ENCODE measurements at regions of chr15 and their contacts with region 1.

Region 1: DNA sequence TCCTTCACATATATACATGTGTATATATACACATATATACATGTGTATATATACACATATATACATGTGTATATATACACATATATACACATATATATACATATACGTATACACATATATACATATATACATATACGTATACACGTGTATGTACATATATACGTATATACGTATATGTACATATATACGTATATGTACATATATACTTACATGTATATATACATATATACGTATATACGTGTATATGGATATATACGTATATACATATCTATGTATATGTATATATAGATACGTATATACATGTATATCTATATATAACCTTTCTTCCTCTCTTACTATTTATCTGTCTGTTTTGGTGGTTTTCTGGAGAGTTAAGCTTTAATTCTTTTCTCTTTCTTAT is 114.8 kb downstream of the NR2E3 start:
- DNase-seq: no peak
- ATAC-seq: no peak
- H3K4me3 Mint-ChIP-seq: no peak overlapping the region
- H3K27ac Mint-ChIP-seq: no peak overlapping the region
- H3K4me1 Mint-ChIP-seq: no peaks in the 10 kb centered on the region
- H3K27me3 Mint-ChIP-seq: no peaks in the 10 kb centered on the region
- CTCF ChIP-seq: no peak

Region 2: DNA sequence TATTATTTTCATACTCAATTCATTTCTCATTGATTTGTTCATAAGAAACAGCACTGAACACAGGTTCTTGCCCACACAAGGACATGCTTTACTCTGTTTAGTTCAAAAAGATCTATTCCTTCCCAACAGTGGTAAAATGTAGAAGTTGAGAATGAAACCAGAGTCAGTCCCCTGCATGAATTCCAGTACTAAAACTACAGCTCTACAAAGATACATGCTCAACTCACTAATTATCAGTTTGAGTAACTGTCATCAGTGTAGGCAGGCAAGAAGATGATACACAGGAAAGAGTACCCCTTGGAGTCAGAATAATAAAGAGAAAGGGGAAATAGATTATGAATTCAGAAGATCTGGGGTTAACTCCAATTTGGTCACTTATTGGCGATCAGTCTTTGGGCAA is 71.6 kb before region 1 on chr15:
- CTCF ChIA-PET with region 1: no interaction called
- POLR2A ChIA-PET with region 1: interaction called, 11 read pairs
- DNase-seq: no peak
- ATAC-seq: no peak
- H3K4me3 Mint-ChIP-seq: no peak overlapping the region
- H3K27ac Mint-ChIP-seq: no peak overlapping the region
- H3K4me1 Mint-ChIP-seq: no peaks in the 10 kb centered on the region
- H3K27me3 Mint-ChIP-seq: no peaks in the 10 kb centered on the region
- CTCF ChIP-seq: no peak